H1 (cell line): ENCODE measurements at regions of chr1 and their contacts with region 1.

Region 1: GRCh38 chr1:221478050-221478949 is 263.6 kb downstream of the DUSP10 start:
- DNase-seq: peak; percentile 25 to 46
- H3K4me3 ChIP-seq: no peak overlapping the region
- H3K27ac ChIP-seq: no peak overlapping the region
- H3K4me1 ChIP-seq: no peaks in the 10 kb centered on the region
- H3K27me3 ChIP-seq: no peaks in the 10 kb centered on the region
- CTCF ChIP-seq: peak; percentile 70 to 85 (median 84)
- EP300 ChIP-seq: no peak
- POLR2A ChIP-seq: no peak
- RAD21 ChIP-seq: peak; percentile 90 to 93

Region 2: DNA sequence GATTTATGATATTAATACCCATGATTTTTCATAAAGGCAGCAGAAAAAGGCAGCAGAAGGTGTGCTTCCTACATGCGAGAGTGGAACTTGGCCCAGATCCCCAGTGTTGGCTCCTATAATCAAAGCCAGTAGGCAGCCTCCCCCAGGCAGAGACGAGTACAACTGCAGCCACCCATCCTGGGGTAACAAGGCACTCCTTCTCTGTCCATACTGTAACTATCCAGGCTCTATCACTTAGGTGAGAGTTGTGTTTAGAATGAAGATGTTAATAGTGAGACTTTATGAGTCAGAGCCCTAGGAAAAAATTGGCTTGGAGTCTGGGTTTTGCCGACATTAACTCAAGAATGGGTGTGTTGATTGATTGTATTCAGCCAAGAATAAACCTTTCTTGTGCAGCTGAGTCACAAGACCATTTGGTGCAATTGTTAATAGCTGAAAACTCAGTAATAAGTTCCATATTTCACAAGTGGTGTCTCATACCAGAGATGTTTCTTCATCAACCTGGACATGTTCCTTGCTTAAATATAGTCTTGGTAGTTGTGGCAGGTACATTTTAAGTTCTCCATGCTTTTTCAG is 58.7 kb before region 1 on chr1:
- CTCF ChIA-PET with region 1: no interaction called
- POLR2A ChIA-PET with region 1: no interaction called
- DNase-seq: no peak
- H3K4me3 ChIP-seq: no peak overlapping the region
- H3K27ac ChIP-seq: no peak overlapping the region
- H3K4me1 ChIP-seq: no peaks in the 10 kb centered on the region
- H3K27me3 ChIP-seq: no peaks in the 10 kb centered on the region
- CTCF ChIP-seq: no peak
- EP300 ChIP-seq: no peak
- POLR2A ChIP-seq: no peak
- RAD21 ChIP-seq: no peak

Region 3: GRCh38 chr1:221451741-221452140 is 26.6 kb before region 1 on chr1:
- CTCF ChIA-PET with region 1: no interaction called
- POLR2A ChIA-PET with region 1: no interaction called
- DNase-seq: no peak
- H3K4me3 ChIP-seq: no peak overlapping the region
- H3K27ac ChIP-seq: no peak overlapping the region
- H3K4me1 ChIP-seq: no peaks in the 10 kb centered on the region
- H3K27me3 ChIP-seq: no peaks in the 10 kb centered on the region
- CTCF ChIP-seq: no peak
- EP300 ChIP-seq: no peak
- POLR2A ChIP-seq: no peak
- RAD21 ChIP-seq: no peak

Region 4: DNA sequence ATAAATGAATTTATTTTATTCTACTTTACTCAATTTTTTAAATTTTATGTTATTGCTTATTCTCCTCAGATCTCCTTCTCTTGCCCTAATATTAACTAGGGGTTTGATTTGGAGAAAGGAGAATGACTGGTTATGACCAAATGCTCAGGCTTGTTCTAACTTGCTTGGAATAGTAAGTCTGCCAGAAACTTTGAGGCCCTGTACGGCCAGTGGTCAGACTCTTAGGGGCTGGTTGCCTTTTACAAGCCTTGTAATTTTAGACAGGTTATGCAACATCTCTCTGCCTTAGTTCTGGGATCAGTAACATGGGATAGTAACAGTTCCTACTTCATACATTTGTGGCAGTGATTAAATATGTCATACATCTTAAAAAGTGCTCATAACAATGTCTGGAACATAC is 16.0 kb before region 1 on chr1:
- CTCF ChIA-PET with region 1: interaction called, 12 read pairs
- POLR2A ChIA-PET with region 1: no interaction called
- DNase-seq: no peak
- H3K4me3 ChIP-seq: no peak overlapping the region
- H3K27ac ChIP-seq: no peak overlapping the region
- H3K4me1 ChIP-seq: no peaks in the 10 kb centered on the region
- H3K27me3 ChIP-seq: no peaks in the 10 kb centered on the region
- CTCF ChIP-seq: no peak
- EP300 ChIP-seq: no peak
- POLR2A ChIP-seq: no peak
- RAD21 ChIP-seq: no peak

Region 5: DNA sequence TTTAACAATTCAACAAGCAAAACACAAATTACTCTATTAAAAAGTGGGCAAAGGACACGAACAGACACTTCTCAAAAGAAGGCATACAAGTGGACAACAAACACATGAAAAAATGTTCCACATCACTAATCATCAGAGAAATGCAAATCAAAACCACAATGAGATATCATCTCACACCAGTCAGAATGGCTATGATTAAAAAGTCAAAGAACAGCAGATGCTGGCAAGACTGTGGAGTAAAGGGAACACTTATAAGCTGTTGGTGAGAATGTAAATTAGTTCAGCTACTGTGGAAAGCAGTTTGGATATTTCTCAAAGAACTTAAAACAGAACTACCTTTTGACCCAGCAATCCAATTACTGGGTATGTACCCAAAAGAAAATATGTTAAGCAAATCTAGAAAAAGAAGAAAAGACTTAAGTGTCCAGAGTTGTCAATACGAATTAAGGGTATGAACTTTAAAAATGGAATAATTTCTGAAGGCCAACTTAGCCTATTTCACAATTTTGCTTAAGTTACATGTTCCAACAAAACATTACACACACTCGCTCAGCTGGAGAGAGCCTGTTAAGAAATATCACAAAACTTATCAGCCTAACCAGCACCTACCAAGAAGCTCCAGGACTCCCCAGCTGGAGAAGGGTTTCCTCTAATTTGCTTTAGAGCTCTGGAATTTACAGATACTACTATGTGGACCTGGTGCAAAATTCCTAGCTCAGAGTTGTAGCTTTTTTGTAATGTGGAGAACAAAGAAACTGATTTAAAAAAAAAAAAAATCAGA is 31.5 kb after region 1 on chr1:
- CTCF ChIA-PET with region 1: no interaction called
- POLR2A ChIA-PET with region 1: no interaction called
- DNase-seq: no peak
- H3K4me3 ChIP-seq: no peak overlapping the region
- H3K27ac ChIP-seq: no peak overlapping the region
- H3K4me1 ChIP-seq: no peaks in the 10 kb centered on the region
- H3K27me3 ChIP-seq: no peaks in the 10 kb centered on the region
- CTCF ChIP-seq: no peak
- EP300 ChIP-seq: no peak
- POLR2A ChIP-seq: no peak
- RAD21 ChIP-seq: no peak